Activated CD4-positive, alpha-beta T cell treated with anti-CD3 and anti-CD28 coated beads for 36 hours (primary cell): ENCODE measurements at regions of chr1 and their contacts with region 1.

Region 1: DNA sequence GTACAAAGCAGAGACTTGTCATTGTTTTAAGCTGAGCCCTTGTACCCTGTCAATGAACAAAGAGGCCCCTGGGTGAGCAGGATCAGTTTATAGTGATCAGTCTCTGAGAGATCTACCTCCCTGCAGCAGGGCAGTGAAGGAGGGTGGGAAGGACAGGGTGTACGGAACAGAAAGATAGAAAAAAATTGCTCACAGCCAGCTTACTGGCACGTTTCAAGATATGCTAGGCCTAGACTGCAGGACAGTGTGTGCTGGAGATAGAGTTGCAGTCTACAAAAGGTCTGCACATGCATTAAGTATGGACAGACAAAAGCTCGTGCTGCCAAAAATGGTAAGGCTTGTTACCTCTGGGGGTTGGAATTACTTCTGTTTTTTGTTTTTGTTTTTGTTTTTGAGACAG is 34.6 kb downstream of the OVAAL start:
- DNase-seq: no peak
- ATAC-seq: no peak
- H3K4me3 Mint-ChIP-seq: no peak overlapping the region
- H3K27ac Mint-ChIP-seq: no peak overlapping the region
- H3K4me1 Mint-ChIP-seq: no peaks in the 10 kb centered on the region
- H3K27me3 Mint-ChIP-seq: peaks cover 8% of the 10 kb centered on the region

Region 2: GRCh38 chr1:180609643-180610555 is 16.5 kb after region 1 on chr1:
- CTCF ChIA-PET with region 1: interaction called, 3 read pairs
- POLR2A ChIA-PET with region 1: no interaction called
- intact Hi-C with region 1: loop called in 1 of 2 experiments (anchors 1 kb)
- DNase-seq: no peak
- ATAC-seq: no peak
- H3K4me3 Mint-ChIP-seq: no peak overlapping the region
- H3K27ac Mint-ChIP-seq: no peak overlapping the region
- H3K4me1 Mint-ChIP-seq: peaks cover 10% of the 10 kb centered on the region
- H3K27me3 Mint-ChIP-seq: no peaks in the 10 kb centered on the region

Region 3: DNA sequence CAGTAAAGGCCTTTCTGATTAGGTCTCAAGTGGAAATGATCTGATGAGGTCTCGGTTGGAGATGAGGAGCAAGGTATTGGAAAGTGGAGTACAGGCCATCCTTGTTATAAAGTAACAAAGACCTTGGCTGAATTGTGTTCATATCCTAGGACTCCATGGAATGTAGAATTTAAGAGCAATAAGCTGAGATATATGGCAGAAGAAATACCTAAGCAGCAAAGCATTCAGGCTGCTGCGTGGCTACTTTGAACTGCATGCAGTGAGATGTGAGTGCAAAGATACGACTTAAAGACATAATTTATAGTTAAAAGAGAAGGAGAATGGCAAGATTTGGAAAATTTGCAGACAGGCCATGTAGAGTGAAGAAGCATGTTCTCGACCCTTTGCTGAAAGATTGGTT is 27.2 kb after region 1 on chr1:
- CTCF ChIA-PET with region 1: no interaction called
- POLR2A ChIA-PET with region 1: no interaction called
- intact Hi-C with region 1: no loop called
- DNase-seq: no peak
- ATAC-seq: no peak
- H3K4me3 Mint-ChIP-seq: no peak overlapping the region
- H3K27ac Mint-ChIP-seq: no peak overlapping the region
- H3K4me1 Mint-ChIP-seq: peaks cover 3% of the 10 kb centered on the region
- H3K27me3 Mint-ChIP-seq: peaks cover 6% of the 10 kb centered on the region